Esophagus muscularis mucosa (tissue), 4 donors: ENCODE measurements at regions of chr21 and their contacts with region 1.

Region 1: GRCh38 chr21:32770871-32771523 is 558 bp downstream of the PAXBP1 start:
- DNase-seq: no peak
- H3K4me3 ChIP-seq: peak overlapping the region; percentile 66 to 87 (median 84)
- H3K27ac ChIP-seq: peak overlapping the region; percentile 84 to 96 (median 92)
- H3K4me1 ChIP-seq: peaks cover 28 to 56% (median 52%) of the 10 kb centered on the region in 4 donors
- H3K27me3 ChIP-seq: peaks cover 0 to 5% (median 0%) of the 10 kb centered on the region in 4 donors
- CTCF ChIP-seq: no peak
- EP300 ChIP-seq: no peak
- POLR2A ChIP-seq: no peak

Region 2: DNA sequence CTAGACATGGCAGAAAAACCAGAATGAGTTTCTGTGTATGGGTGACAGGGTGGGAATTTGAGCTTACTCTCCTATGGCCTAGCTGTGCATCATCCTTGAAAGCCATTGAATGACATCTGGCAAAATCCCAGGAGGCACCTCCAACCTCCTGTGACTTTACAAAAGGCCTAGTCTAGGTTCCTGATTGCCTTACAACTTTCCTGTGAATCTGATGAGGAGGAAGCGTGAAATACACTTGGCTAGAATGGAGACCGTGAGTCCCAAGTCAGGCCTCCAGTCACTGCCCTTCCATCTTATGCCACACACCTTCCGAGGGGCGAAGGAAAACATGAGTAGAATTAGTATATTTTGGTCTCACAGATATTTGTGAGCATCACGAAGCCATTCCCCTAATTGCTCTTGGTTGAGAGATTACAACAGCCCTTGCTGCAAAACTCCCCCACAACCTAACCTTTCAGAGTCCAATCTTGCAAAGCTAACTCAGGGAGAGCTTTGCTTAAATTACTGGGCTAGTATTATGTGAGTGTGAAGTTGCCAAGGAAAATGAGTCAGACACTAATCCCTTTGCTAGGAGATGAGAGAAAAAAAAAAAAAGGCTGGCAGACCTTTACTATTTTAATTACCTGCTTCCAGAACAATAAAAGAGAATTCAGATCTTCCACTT is 36.9 kb after region 1 on chr21:
- intact Hi-C with region 1: loop called (anchors 5 kb)
- DNase-seq: peak; percentile 55
- H3K4me3 ChIP-seq: no peak overlapping the region
- H3K27ac ChIP-seq: peak overlapping the region; percentile 33 to 66 (median 54)
- H3K4me1 ChIP-seq: peaks cover 0 to 45% (median 37%) of the 10 kb centered on the region in 4 donors
- H3K27me3 ChIP-seq: no peaks in the 10 kb centered on the region
- CTCF ChIP-seq: no peak
- EP300 ChIP-seq: no peak
- POLR2A ChIP-seq: no peak